Activated T-helper 2 cell treated with anti-CD3 and anti-CD28 coated beads, Interferon-gamma antibody, Interleukin-2, Interleukin-4, amounts not matched to agents 10 μg/mL and 5 μg/mL and 100 μg/mL, durations not matched to agents 14 hours and 24 hours and 36 hours (primary cell): ENCODE measurements at regions of chr18 and their contacts with region 1.

Region 1: DNA sequence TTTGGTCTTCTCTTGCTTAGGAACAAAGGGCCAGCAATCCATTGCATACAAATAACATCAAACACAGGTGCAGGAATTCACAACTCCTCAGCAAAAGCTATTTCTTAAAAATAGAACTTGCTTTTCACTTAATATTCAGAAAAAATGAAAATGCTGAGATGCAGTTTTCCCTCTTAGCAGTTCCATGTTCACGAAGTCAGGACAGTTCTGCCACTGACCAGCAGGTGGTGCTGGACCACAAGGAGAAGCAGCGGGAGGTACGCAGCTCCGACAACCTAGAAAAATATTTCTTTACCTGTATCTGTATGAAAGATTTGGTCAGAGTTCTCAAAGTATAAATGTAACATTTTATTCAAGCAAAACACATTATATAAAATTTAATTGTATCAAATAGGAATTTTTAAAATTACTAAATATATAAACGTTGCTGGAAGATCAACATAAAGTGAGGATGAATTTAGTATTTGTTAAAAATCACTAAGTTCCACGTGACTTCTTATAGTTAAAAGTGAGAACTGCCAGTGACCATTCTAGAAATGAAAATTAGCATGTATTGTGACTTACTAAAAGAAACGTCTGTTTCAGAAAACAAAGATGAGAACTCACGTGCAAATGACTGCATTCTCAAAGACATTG is 48.8 kb downstream of the ADNP2 start:
- DNase-seq: peak; percentile 48
- H3K4me3 Mint-ChIP-seq: no peak overlapping the region
- H3K27ac Mint-ChIP-seq: no peak overlapping the region
- H3K4me1 Mint-ChIP-seq: no peaks in the 10 kb centered on the region
- H3K27me3 Mint-ChIP-seq: peaks cover 5% of the 10 kb centered on the region

Region 2: DNA sequence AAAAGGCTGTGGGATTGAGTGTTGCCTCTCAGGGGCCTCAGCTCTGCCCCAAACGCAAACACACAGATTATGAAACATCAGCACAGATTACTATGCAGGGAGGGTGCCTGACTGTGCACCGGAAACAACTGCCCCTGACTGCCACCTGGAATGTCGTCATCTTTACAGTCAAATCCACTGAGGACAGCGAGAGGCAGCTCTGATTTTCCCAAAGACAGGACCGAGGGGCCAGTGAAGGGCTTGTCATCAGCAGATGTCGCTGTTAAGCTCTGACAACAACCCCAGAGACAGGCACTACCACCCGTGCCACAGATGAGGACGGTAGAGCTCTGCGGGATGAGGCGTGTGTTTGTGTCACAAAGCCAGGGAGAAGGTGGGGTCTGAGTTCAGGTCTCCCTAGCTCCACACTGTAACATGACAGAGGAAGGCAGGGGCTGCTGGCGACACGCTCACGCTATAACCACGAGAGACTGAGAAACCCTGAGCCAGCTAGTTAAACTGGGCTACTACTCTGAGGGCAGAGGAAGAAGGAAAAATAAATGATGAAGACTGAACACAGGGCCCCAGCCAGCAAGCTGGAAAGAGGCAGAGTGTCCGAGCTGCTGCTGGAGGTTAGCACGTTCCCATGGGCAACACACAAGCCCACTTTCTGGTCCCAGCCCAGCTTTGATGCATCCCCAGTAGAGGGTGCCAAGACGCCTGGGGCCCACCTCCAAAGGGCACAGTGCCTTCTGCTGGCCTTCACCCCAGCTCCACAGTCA is 42.5 kb after region 1 on chr18:
- intact Hi-C with region 1: loop called (anchors 5 kb)
- DNase-seq: no peak
- H3K4me3 Mint-ChIP-seq: no peak overlapping the region
- H3K27ac Mint-ChIP-seq: no peak overlapping the region
- H3K4me1 Mint-ChIP-seq: peaks cover 25% of the 10 kb centered on the region
- H3K27me3 Mint-ChIP-seq: peaks cover 46% of the 10 kb centered on the region